Activated CD4-positive, alpha-beta T cell treated with anti-CD3 and anti-CD28 coated beads, Interleukin-2, amount 10 ng/mL, durations not matched to agents 24 days and 14 days (primary cell): ENCODE measurements at regions of chr1 and their contacts with region 1.

Region 1: DNA sequence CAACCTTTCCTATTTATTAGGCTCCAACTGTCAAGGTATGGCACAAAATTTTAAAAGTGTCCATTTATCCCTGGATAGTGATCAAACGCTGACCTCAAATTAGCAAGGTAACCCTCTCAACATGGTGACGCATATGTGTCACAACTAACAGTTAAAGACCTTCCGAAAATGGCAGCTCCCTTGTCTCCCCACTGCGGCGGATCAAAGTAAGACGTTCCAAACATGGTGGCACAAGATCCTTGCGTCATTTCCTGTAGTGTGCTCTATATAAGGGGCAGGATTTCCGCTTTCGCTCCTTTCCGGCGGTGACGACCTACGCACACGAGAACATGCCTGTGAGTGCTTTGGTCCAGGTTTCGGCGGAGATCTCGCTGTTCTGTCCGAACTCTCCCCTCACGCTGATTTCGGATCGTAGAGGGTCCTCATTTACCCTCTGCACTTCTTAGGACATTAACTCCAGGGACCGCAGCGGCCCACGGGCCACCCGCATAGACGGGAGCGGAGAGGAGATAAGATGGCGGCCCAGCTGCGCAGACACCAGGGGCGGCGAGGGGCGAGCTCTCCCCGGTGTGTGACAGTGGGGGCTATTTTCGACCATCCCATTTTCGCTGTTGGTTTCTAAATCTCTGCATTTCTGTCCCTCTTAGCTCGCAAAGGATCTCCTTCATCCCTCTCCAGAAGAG is at the start of gene RPS27:
- DNase-seq: peak; percentile 96
- H3K4me3 Mint-ChIP-seq: peak within 1 kb of the TSS; percentile 93
- H3K27ac Mint-ChIP-seq: peak within 1 kb of the TSS; percentile 96
- H3K4me1 Mint-ChIP-seq: peaks cover 38% of the 10 kb centered on the region
- H3K27me3 Mint-ChIP-seq: no peaks in the 10 kb centered on the region
- total RNA-seq, gene RPS27: 1,207 and 1,242 TPM in 2 replicates

Region 2: DNA sequence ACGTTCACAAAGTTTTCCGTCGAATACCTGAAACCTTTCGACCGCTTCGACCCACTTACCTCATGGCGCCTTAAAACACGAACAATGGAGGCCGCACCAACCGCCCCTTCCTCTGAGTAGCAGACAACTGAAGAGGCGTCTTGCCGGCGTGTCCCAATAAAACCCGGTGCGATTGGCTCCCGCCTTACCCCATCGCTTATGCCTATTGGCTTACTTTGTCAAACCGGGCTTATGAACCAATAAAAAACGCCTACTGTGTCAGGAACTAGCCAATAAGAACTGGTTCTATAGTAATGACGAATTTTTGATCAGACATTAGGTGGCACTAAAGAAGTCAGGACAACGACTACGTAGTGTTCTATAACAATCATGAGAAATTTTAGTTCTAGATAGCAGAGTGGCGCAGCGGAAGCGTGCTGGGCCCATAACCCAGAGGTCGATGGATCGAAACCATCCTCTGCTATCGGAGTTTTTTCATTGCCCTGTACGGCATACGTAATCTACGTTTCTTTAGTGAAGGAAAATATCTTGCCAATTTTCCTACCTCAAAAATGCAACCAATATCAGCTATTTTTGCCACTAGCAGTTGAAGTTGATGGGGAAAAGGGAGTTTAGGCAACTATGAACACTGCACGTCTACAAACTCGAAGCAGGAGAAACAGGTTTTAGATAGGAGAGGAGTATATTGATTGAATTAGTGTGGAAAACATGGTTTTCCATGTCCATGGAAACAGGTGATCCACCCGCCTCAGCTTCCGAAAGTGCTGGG is 319.6 kb before region 1 on chr1 and contains the start of gene ILF2:
- intact Hi-C with region 1: loop called (anchors 2 kb)
- DNase-seq: peak; percentile 99
- H3K4me3 Mint-ChIP-seq: no peak within 1 kb of the TSS
- H3K27ac Mint-ChIP-seq: peak within 1 kb of the TSS; percentile 85
- H3K4me1 Mint-ChIP-seq: peaks cover 26% of the 10 kb centered on the region
- H3K27me3 Mint-ChIP-seq: no peaks in the 10 kb centered on the region
- total RNA-seq, gene ILF2: 377 and 390 TPM in 2 replicates

Region 3: GRCh38 chr1:153796791-153797659 is 193.6 kb before region 1 on chr1:
- intact Hi-C with region 1: loop called (anchors 1 kb)
- DNase-seq: peak; percentile 94
- H3K4me3 Mint-ChIP-seq: no peak overlapping the region
- H3K27ac Mint-ChIP-seq: no peak overlapping the region
- H3K4me1 Mint-ChIP-seq: peaks cover 12% of the 10 kb centered on the region
- H3K27me3 Mint-ChIP-seq: no peaks in the 10 kb centered on the region

Region 4: DNA sequence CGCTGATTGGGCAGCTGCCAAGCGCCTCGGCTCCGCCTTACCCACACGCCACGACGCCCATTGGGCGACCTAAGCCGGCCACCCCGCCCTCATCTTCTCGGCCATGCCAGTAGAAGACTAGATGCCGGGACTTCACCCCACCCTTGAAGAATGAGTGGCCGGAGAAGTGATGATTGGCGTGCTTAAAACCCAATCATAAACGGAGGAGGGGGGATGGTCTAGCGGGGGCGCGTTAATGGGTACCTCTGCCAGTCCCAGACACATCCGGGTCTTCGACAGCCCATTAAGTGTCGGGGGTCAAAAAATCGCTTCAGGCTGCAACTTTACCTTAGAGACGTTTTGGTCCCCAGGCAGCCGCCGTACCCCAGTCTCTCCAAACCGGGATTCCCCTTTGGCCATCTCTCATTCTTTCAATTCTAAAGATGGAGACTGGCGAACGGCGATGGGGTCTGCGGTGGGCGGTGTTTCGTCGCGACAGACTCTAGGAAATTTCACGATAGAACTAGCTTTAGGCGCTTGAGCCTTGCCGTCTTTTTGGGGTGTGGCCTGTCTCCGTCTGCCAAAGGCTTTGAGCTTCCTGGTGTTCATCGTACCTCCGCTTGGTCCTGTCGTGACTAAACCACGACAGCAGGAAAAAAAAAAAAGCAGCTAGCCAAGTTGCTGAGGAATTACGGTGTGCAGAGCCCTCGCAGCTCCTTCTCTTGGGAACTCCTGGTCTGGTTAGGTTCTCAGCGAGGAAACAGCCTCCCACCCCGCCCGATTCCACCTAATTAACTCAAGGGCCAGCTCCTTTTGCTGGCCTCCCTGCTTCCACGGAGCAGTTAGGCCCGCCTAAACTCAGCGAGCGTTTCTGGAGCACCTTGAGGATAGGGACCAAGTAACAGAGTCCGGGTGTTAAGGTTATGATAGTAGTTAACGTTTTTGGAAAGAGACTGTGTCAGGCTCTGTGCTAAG is 67.4 kb before region 1 on chr1 and contains the start of gene GATAD2B:
- intact Hi-C with region 1: loop called (anchors 2 kb)
- DNase-seq: peak; percentile 100
- H3K4me3 Mint-ChIP-seq: peak within 1 kb of the TSS; percentile 86
- H3K27ac Mint-ChIP-seq: peak within 1 kb of the TSS; percentile 98
- H3K4me1 Mint-ChIP-seq: peaks cover 36% of the 10 kb centered on the region
- H3K27me3 Mint-ChIP-seq: peaks cover 2% of the 10 kb centered on the region
- total RNA-seq, gene GATAD2B: 68.8 and 69.0 TPM in 2 replicates

Region 5: DNA sequence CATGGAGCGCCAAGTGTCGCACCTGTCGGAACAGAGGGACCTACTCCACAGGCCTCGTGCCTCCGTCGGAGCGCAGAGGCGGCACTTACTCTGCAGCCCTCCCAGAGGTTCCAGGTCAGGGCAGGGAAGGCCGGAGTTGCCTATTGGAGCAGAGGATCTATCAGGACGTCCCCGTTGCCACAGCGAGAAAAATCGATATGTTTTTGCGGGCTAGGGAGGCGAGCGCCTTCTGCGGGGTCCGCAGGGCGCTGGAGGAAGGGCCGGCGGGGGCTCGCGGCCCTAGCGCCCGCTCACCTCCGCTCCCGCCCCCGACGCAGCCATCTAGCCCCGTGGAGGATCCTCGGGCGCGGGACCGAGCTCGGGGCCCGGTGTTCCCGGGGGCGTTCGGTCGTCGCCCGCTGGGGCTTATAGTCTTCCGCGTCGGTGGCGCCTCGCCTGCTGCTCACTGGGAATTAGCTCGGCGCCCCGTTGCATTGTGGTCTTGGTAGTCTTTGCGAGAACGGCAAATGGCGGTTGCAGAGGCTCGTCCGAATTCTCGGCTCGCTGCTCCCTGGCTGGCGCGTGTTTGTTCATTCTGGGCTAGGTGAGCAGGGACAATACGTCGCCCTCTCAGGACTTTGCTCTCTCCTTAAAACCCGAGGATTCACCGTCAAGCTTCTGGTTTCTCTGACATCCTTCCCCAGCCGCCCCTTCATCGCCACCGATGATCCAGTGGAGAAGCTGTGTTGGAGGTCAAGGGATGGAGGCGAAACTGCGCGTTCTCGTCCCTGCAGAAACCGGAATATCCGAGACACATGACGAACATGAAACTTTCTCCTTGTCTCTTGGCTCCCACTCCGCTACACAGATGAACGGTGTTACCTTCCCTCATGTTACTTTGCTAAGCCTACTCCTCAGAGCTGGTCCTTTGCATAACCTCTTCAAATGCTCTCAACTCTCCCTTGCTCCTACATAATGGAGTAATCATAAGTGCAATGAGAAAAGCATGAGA is 13.1 kb before region 1 on chr1 and contains the start of gene JTB:
- intact Hi-C with region 1: loop called (anchors 1 kb)
- DNase-seq: peak; percentile 95
- H3K4me3 Mint-ChIP-seq: peak within 1 kb of the TSS; percentile 99
- H3K27ac Mint-ChIP-seq: peak within 1 kb of the TSS; percentile 97
- H3K4me1 Mint-ChIP-seq: peaks cover 36% of the 10 kb centered on the region
- H3K27me3 Mint-ChIP-seq: no peaks in the 10 kb centered on the region
- total RNA-seq, gene JTB: 195 and 200 TPM in 2 replicates

Region 6: DNA sequence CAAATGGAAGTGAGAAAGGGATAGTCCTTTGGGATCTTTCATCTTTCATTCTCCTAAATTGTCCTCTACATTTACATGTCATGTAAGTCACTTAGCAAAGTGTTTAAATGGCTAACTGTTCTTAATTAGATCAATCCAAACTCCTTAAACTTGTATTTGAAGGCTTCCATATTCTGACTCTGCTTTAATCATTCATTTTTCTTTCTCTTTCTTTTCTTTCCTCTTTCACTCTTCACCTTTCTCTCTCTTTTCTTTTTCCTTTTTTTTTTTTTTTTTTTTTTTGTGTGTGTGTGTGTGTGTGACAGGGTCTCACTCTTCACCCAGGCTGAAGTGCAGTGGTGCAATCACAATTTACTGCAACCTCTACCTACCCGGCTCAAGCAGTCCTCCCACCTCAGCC is 71.7 kb after region 1 on chr1:
- intact Hi-C with region 1: no loop called
- DNase-seq: no peak
- H3K4me3 Mint-ChIP-seq: no peak overlapping the region
- H3K27ac Mint-ChIP-seq: no peak overlapping the region
- H3K4me1 Mint-ChIP-seq: peaks cover 2% of the 10 kb centered on the region
- H3K27me3 Mint-ChIP-seq: peaks cover 14% of the 10 kb centered on the region

Region 7: DNA sequence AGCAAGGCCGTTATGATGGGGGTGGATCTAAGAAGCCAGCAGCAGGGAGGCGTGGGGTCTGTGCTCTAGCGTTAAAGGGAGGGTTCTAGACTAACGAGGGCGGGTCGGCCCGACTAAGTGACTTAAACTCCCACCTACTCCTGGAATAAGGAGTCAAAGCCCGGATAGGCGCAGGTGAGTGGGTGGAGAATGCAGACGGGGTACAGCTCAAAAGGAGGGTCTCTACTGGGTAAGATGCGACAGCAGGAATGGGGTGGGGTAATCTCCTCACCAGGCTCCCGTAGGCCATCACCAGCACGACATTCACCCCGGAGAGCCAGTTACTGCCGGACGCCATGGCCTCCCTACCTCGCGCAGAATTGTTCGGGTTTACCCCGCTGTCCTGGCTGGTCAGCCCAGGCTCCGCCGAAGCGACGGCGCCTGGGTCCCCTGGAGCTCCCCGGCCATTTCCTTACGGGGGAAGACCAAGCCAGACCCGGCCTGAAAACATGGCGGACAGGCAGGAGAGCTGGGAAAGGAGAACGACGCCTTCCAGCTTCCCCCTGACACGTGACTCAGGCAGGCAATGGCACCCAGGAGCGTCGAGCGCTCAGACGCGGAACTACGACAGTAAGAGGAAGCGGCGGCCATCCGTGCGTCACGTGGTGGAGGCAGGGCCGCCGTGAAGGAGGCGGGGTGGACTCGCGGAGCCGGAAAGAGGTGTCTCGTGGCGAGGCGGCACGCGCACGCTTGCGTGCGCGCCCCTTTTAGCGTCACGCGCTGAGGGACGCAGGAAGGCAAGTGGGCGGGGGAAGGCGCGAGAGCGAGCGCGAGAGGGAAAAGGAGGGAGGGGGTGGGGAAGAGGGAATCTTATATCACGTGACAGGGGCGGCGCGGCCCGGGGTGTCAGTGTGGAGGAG is 229.7 kb after region 1 on chr1 and contains the start of gene UBAP2L:
- intact Hi-C with region 1: loop called (anchors 1 kb)
- DNase-seq: peak; percentile 100
- H3K4me3 Mint-ChIP-seq: peak within 1 kb of the TSS; percentile 96
- H3K27ac Mint-ChIP-seq: peak within 1 kb of the TSS; percentile 95
- H3K4me1 Mint-ChIP-seq: peaks cover 55% of the 10 kb centered on the region
- H3K27me3 Mint-ChIP-seq: peaks cover 3% of the 10 kb centered on the region
- total RNA-seq, gene UBAP2L: 277 and 281 TPM in 2 replicates